ENCODE measurements at regions of chr3 and their contacts with region 1.

Region 1: DNA sequence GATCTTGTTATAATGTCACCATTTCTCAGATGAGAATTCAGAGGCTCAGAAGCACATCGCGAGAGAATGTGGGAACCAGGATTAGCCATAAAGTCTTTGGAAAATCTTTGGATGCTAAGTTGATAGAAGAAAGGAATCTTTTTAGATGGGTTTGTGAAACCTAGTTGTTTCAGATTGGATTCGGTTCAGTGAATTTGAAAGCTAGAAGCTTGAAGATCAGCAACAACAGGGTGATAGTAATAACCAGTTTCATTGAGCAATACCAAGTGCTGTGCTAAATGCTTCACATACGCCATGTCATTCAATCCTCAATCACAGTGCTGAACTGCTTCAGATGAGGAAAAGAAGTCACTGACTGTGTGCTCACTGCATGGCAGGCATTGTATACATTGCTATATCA is 47.4 kb upstream of the MITF start:
- DNase-seq: no peak
- ATAC-seq: no peak
- H3K4me3 ChIP-seq: no peak overlapping the region
- H3K27ac ChIP-seq: no peak overlapping the region
- H3K4me1 ChIP-seq: peaks cover 0 to 11% (median 0%) of the 10 kb centered on the region in 12 donors
- H3K27me3 ChIP-seq: no peaks in the 10 kb centered on the region
- CTCF ChIP-seq: no peak
- POLR2A ChIP-seq: no peak

Region 2: GRCh38 chr3:69739204-69740102 is 47.6 kb after region 1 on chr3 and contains the start of gene MITF:
- intact Hi-C with region 1: loop called in 3 of 10 experiments (anchors 5 kb)
- DNase-seq: peak; percentile 94 to 97 (median 95)
- ATAC-seq: peak; percentile 95 to 98 (median 98)
- H3K4me3 ChIP-seq: peak within 1 kb of the TSS; percentile 67 to 98 (median 84)
- H3K27ac ChIP-seq: peak within 1 kb of the TSS; percentile 79 to 94 (median 92)
- H3K4me1 ChIP-seq: peaks cover 0 to 51% (median 26%) of the 10 kb centered on the region in 12 donors
- H3K27me3 ChIP-seq: no peaks in the 10 kb centered on the region
- CTCF ChIP-seq: peak in 1 of 12 donors; percentile 6
- POLR2A ChIP-seq: peak; percentile 71 to 91
- total RNA-seq, gene MITF: 61.4 to 114 (median 86.9) TPM

Region 3: DNA sequence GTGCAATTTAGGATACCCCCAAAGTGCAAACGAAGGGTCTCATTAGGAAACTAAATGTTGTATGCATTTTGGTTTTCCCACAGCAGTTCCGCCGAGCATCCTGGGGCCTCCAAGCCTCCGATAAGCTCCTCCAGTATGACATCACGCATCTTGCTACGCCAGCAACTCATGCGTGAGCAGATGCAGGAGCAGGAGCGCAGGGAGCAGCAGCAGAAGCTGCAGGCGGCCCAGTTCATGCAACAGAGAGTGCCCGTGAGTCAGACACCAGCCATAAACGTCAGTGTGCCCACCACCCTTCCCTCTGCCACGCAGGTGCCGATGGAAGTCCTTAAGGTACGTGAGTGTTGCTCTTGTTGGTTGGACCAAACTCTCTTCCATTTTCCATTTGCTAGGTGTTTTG is 187.2 kb after region 1 on chr3:
- intact Hi-C with region 1: no loop called
- DNase-seq: no peak
- ATAC-seq: no peak
- H3K4me3 ChIP-seq: no peak overlapping the region
- H3K27ac ChIP-seq: peak overlapping the region in 1 of 12 donors; percentile 56
- H3K4me1 ChIP-seq: peaks cover 0 to 29% (median 6%) of the 10 kb centered on the region in 12 donors
- H3K27me3 ChIP-seq: no peaks in the 10 kb centered on the region
- CTCF ChIP-seq: no peak
- POLR2A ChIP-seq: no peak

Region 4: GRCh38 chr3:69948246-69948862 is 256.5 kb after region 1 on chr3:
- intact Hi-C with region 1: loop called (anchors 2 to 5 kb)
- DNase-seq: no peak
- ATAC-seq: no peak
- H3K4me3 ChIP-seq: no peak overlapping the region
- H3K27ac ChIP-seq: peak overlapping the region in 1 of 12 donors; percentile 26
- H3K4me1 ChIP-seq: peaks cover 0 to 13% (median 1%) of the 10 kb centered on the region in 12 donors
- H3K27me3 ChIP-seq: no peaks in the 10 kb centered on the region
- CTCF ChIP-seq: peak; percentile 42 to 77 (median 60)
- POLR2A ChIP-seq: no peak